MCF 10A (cell line): ENCODE measurements at regions of chr1 and their contacts with region 1.

Region 1: GRCh38 chr1:183318433-183318832 is 99.7 kb downstream of the NMNAT2 start:
- DNase-seq: peak; percentile 95
- H3K4me3 Mint-ChIP-seq: no peak overlapping the region
- H3K27ac Mint-ChIP-seq: peak overlapping the region; percentile 60
- H3K4me1 Mint-ChIP-seq: peaks cover 26% of the 10 kb centered on the region
- H3K27me3 Mint-ChIP-seq: no peaks in the 10 kb centered on the region
- CTCF ChIP-seq: peak; percentile 79

Region 2: GRCh38 chr1:182955596-182956588 is 362.5 kb before region 1 on chr1:
- CTCF ChIA-PET with region 1: interaction called, 30 read pairs
- POLR2A ChIA-PET with region 1: no interaction called
- intact Hi-C with region 1: no loop called
- DNase-seq: peak; percentile 73
- H3K4me3 Mint-ChIP-seq: no peak overlapping the region
- H3K27ac Mint-ChIP-seq: no peak overlapping the region
- H3K4me1 Mint-ChIP-seq: peaks cover 5% of the 10 kb centered on the region
- H3K27me3 Mint-ChIP-seq: no peaks in the 10 kb centered on the region
- CTCF ChIP-seq: no peak

Region 3: GRCh38 chr1:183234660-183235476 is 83.6 kb before region 1 on chr1:
- CTCF ChIA-PET with region 1: interaction called, 6 read pairs
- POLR2A ChIA-PET with region 1: no interaction called
- intact Hi-C with region 1: loop called (anchors 1 kb)
- DNase-seq: peak; percentile 100
- H3K4me3 Mint-ChIP-seq: peak overlapping the region; percentile 71
- H3K27ac Mint-ChIP-seq: peak overlapping the region; percentile 86
- H3K4me1 Mint-ChIP-seq: peaks cover 49% of the 10 kb centered on the region
- H3K27me3 Mint-ChIP-seq: no peaks in the 10 kb centered on the region
- CTCF ChIP-seq: peak; percentile 83

Region 4: DNA sequence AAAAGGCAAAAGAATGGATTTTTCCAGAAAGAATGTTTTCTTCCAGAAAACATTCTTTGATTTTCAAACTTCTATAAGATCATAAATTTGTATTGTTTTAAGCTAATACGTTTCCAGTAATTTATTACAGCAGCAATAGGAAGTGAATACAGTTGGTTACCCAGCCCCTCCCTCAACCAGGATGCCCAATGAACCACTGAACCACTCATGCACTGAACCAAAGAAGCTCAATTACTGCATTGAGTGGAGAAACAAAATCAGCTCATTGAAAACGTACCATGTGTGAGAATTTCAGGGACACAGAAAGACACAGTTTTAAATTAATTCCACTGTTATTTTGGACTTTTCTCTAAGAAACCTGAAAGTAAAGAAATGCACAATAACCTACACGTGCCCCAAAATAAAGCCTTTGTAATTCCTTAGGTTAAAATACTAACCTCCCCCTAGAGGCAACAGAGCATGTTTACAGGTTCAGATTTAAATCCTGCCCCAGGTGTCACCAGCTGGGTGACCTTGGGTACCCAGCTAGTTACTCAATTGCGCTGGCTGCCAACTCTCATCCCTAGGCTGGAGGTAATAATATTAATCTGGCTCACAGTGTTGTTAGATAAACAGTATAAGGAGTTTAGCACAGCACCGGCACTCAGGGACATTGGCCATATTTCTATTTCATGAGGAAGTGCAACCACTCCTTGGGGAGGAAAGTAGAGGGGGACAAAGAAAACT is 12.0 kb before region 1 on chr1:
- CTCF ChIA-PET with region 1: interaction called, 21 read pairs
- POLR2A ChIA-PET with region 1: interaction called, 5 read pairs
- intact Hi-C with region 1: no loop called
- DNase-seq: peak; percentile 46
- H3K4me3 Mint-ChIP-seq: no peak overlapping the region
- H3K27ac Mint-ChIP-seq: no peak overlapping the region
- H3K4me1 Mint-ChIP-seq: peaks cover 21% of the 10 kb centered on the region
- H3K27me3 Mint-ChIP-seq: no peaks in the 10 kb centered on the region
- CTCF ChIP-seq: peak; percentile 32

Region 5: GRCh38 chr1:183339556-183340167 is 21.2 kb after region 1 on chr1:
- CTCF ChIA-PET with region 1: interaction called, 11 read pairs
- POLR2A ChIA-PET with region 1: no interaction called
- intact Hi-C with region 1: no loop called
- DNase-seq: no peak
- H3K4me3 Mint-ChIP-seq: no peak overlapping the region
- H3K27ac Mint-ChIP-seq: no peak overlapping the region
- H3K4me1 Mint-ChIP-seq: no peaks in the 10 kb centered on the region
- H3K27me3 Mint-ChIP-seq: no peaks in the 10 kb centered on the region
- CTCF ChIP-seq: no peak